Activated naive CD4-positive, alpha-beta T cell treated with anti-CD3 and anti-CD28 coated beads for 36 hours (primary cell): ENCODE measurements at regions of chr5 and their contacts with region 1.

Region 1: DNA sequence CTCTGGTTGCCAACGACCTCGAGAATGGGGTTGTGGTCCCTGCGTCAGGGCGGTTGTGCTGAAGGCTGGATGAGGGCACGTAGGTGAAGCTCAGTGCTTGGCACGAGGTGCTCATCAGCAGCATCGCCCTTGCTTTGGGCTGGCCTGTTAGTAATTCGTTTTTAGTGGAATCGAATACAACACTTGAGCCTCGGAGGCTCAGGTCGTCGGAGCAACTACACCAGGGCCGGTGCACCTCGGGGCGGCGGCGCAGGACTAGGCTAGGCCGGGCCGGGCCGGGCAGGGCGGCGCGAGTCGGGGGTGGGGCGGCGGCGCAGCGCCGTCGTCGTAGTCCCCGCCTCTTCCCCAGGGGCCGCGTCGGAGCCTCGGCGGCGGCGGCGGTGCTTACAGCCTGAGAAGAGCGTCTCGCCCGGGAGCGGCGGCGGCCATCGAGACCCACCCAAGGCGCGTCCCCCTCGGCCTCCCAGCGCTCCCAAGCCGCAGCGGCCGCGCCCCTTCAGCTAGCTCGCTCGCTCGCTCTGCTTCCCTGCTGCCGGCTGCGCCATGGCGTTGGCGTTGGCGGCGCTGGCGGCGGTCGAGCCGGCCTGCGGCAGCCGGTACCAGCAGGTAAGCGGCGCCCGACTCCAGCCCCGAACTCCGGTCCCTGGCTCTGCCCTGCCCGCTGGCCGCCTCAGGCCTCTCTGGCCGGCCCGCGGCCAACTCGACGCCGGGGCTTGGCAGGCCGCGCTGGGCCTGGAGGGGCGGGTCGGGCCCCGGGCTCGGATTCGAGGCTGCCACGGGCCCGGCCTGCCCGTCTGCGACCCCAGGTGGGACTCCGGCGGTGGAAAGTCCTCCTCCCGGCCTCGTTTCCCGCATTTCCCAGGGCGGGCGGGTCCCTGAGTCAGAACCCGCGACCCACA is at the start of gene NDFIP1:
- DNase-seq: peak; percentile 88
- H3K4me3 Mint-ChIP-seq: peak within 1 kb of the TSS; percentile 87
- H3K27ac Mint-ChIP-seq: peak within 1 kb of the TSS; percentile 97
- H3K4me1 Mint-ChIP-seq: peaks cover 68% of the 10 kb centered on the region
- H3K27me3 Mint-ChIP-seq: no peaks in the 10 kb centered on the region
- total RNA-seq, gene NDFIP1: 103 to 104 TPM

Region 2: GRCh38 chr5:142024771-142025304 is 83.8 kb before region 1 on chr5:
- CTCF ChIA-PET with region 1: interaction called, 121 read pairs
- intact Hi-C with region 1: loop called (anchors 2 kb)
- DNase-seq: peak; percentile 94
- H3K4me3 Mint-ChIP-seq: peak overlapping the region; percentile 91
- H3K27ac Mint-ChIP-seq: peak overlapping the region; percentile 99
- H3K4me1 Mint-ChIP-seq: peaks cover 21% of the 10 kb centered on the region
- H3K27me3 Mint-ChIP-seq: no peaks in the 10 kb centered on the region

Region 3: GRCh38 chr5:142095651-142096330 is 12.9 kb before region 1 on chr5:
- CTCF ChIA-PET with region 1: interaction called, 13 read pairs
- intact Hi-C with region 1: loop called (anchors 1 kb)
- DNase-seq: peak; percentile 95
- H3K4me3 Mint-ChIP-seq: peak overlapping the region; percentile 48
- H3K27ac Mint-ChIP-seq: peak overlapping the region; percentile 96
- H3K4me1 Mint-ChIP-seq: peaks cover 81% of the 10 kb centered on the region
- H3K27me3 Mint-ChIP-seq: no peaks in the 10 kb centered on the region

Region 4: DNA sequence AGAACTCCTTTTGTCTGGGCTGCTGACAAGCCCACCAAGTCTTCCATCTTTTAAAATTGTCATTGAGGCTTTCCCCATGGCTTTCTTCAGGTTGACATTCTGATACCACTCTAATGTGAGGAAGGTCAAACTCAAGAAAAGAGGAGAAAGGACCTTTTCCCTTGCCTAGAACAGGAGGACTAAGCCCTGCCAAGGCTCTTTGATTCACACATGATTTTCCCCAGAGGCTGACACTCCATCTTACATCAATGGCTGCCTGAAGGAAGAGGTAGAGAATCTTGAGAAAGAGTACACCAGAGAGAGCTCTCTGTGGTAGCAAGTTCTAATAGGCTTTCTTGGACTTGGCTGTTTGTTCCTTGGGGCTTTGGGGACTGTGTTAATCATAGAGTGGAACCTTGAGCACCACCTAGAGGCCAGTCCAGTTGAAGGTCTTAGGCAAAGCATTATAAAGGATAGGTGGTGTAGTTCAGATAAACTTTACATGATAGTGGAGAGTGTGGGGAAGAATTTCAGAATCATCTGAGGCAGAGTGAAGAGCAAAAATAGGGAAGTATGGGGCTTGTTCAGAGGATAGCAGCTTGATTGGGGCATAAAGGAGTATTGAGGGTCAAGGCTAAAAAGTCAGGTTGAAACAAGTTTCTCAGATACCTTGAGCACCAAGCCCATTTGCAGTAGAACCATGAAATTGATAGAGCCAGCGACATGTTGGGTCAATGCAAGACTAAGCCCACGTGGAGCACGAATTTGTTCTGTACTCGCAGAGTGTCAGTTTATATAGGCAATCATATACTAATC is 36.6 kb after region 1 on chr5:
- CTCF ChIA-PET with region 1: interaction called, 10 read pairs
- intact Hi-C with region 1: loop called (anchors 2 kb)
- DNase-seq: peak; percentile 82
- H3K4me3 Mint-ChIP-seq: no peak overlapping the region
- H3K27ac Mint-ChIP-seq: no peak overlapping the region
- H3K4me1 Mint-ChIP-seq: peaks cover 11% of the 10 kb centered on the region
- H3K27me3 Mint-ChIP-seq: no peaks in the 10 kb centered on the region